ENCODE measurements at regions of chr6 and their contacts with region 1.

Region 1: DNA sequence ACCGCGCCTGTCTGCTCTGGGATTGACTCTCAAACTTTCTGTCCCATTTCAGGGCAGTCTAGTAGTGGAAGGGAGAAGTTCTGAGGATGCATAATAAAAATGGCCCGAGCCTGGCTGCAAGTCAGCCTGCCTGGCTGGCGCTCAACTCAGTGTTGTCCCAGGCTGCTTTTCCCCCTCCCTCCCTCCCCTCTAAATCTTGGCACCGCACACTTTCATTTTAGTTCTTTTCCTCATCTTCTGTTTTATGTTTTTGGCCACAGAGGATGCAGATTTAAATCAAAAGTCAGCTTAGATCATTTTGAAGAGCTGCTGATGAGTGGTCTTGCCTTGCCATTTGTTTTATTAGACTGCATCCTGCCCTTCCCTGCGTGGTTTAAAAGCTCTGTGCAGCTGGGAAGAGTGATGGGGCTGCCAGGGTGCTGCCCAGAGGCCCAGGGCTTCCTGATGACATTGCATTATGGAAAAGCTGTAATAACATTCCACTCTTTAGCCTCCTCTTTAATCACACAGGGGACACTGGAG is 6.5 kb upstream of the UQCC2 start:
- DNase-seq: no peak
- ATAC-seq: peak in 2 of 8 donors; percentile 44 to 55
- H3K4me3 ChIP-seq: no peak overlapping the region
- H3K27ac ChIP-seq: peak overlapping the region in 7 of 10 donors; percentile 5 to 60 (median 39)
- H3K4me1 ChIP-seq: peaks cover 0 to 32% (median 19%) of the 10 kb centered on the region in 9 donors
- H3K27me3 ChIP-seq: peaks cover 0 to 4% (median 0%) of the 10 kb centered on the region in 7 donors
- CTCF ChIP-seq: no peak

Region 2: GRCh38 chr6:33761922-33762629 is 44.1 kb after region 1 on chr6:
- intact Hi-C with region 1: loop called in 6 of 10 experiments (anchors 5 kb)
- DNase-seq: peak; percentile 80 to 87
- ATAC-seq: peak; percentile 85 to 95 (median 91)
- H3K4me3 ChIP-seq: peak overlapping the region in 1 of 10 donors; percentile 3
- H3K27ac ChIP-seq: peak overlapping the region; percentile 14 to 82 (median 71)
- H3K4me1 ChIP-seq: peaks cover 2 to 30% (median 19%) of the 10 kb centered on the region in 9 donors
- H3K27me3 ChIP-seq: no peaks in the 10 kb centered on the region
- CTCF ChIP-seq: peak; percentile 44 to 78 (median 66)